ENCODE measurements at regions of chr2 and their contacts with region 1.

Region 1: GRCh38 chr2:20015472-20016083 is 3.1 kb upstream of the MATN3 start:
- DNase-seq: peak; percentile 63
- H3K4me3 ChIP-seq: no peak overlapping the region
- H3K27ac ChIP-seq: no peak overlapping the region
- H3K4me1 ChIP-seq: peaks cover 13% of the 10 kb centered on the region
- H3K27me3 ChIP-seq: peaks cover 0 to 3% of the 10 kb centered on the region in 2 experiments
- CTCF ChIP-seq: peak; percentile 29 to 44
- POLR2A ChIP-seq: no peak

Region 2: DNA sequence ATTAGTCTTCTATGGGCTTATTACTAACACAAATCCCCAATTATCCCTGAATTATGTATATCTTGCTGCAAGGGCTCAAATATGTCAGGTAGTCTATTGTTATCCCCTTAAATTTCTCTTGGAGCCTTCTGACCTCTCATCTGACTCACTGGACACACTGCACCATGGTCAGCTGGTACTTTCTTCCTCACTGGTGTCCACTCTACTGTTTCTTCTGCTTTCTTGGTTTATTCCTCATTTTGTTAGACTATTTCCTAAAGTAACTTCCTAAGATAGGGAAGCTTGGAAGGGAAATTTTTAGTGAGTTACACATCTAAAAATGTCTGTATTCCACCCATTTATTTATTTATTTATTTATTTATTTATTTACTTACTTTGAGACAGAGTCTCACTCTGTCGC is 52.2 kb before region 1 on chr2:
- CTCF ChIA-PET with region 1: interaction called, 104 read pairs
- POLR2A ChIA-PET with region 1: no interaction called
- dilution Hi-C with region 1: no loop called
- intact Hi-C with region 1: no loop called
- DNase-seq: no peak
- H3K4me3 ChIP-seq: no peak overlapping the region
- H3K27ac ChIP-seq: no peak overlapping the region
- H3K4me1 ChIP-seq: no peaks in the 10 kb centered on the region
- H3K27me3 ChIP-seq: no peaks in the 10 kb centered on the region
- CTCF ChIP-seq: no peak
- POLR2A ChIP-seq: no peak

Region 3: GRCh38 chr2:19989681-19990415 is 25.7 kb before region 1 on chr2 and contains the start of gene WDR35:
- CTCF ChIA-PET with region 1: interaction called, 14 read pairs
- POLR2A ChIA-PET with region 1: interaction called, 3 read pairs
- dilution Hi-C with region 1: no loop called
- intact Hi-C with region 1: loop called (anchors 1 kb)
- DNase-seq: peak; percentile 53
- H3K4me3 ChIP-seq: peak within 1 kb of the TSS; percentile 31 to 78 (median 74)
- H3K27ac ChIP-seq: peak within 1 kb of the TSS; percentile 40
- H3K4me1 ChIP-seq: peaks cover 13% of the 10 kb centered on the region
- H3K27me3 ChIP-seq: no peaks in the 10 kb centered on the region
- CTCF ChIP-seq: no peak
- POLR2A ChIP-seq: peak; percentile 83
- total RNA-seq, gene WDR35: 8.0 TPM in 2 replicates

Region 4: DNA sequence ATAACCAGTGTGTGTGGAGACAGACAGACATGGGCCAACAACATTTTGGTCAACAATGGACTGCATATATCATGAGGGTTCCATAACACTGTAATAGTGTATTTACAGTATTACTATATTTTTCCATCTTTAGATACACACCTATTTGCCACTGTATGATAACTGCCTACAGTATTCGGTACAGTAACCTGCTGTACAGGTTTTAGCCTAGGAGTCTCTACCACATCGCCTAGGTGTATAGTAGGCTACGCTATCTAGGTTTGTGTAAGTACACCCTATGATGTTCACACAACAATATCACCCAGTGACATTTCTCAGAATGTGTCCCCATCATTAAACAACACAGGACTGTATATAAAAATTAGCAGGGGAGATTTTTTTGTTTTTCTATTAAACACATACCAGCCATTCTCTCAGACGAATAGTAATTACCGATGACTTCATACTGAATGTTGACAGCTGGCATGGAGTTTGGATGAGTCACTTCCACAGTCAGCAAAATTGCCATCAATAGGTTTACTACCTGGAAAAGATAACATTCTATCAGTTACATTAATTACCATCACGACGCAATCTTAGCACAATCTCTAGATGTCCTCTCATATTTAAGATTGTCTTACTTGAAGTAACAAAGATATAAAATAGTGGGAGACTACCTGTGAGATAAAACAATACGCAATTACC is 25.1 kb after region 1 on chr2:
- CTCF ChIA-PET with region 1: interaction called, 146 read pairs
- POLR2A ChIA-PET with region 1: interaction called, 3 read pairs
- dilution Hi-C with region 1: no loop called
- intact Hi-C with region 1: no loop called
- DNase-seq: peak; percentile 85
- H3K4me3 ChIP-seq: no peak overlapping the region
- H3K27ac ChIP-seq: peak overlapping the region; percentile 7
- H3K4me1 ChIP-seq: peaks cover 53% of the 10 kb centered on the region
- H3K27me3 ChIP-seq: no peaks in the 10 kb centered on the region
- CTCF ChIP-seq: no peak
- POLR2A ChIP-seq: no peak

Region 5: GRCh38 chr2:20077466-20077865 is 61.9 kb after region 1 on chr2:
- CTCF ChIA-PET with region 1: interaction called, 16 read pairs
- POLR2A ChIA-PET with region 1: no interaction called
- dilution Hi-C with region 1: no loop called
- intact Hi-C with region 1: no loop called
- DNase-seq: no peak
- H3K4me3 ChIP-seq: no peak overlapping the region
- H3K27ac ChIP-seq: no peak overlapping the region
- H3K4me1 ChIP-seq: no peaks in the 10 kb centered on the region
- H3K27me3 ChIP-seq: peaks cover 7 to 14% of the 10 kb centered on the region in 2 experiments
- CTCF ChIP-seq: no peak
- POLR2A ChIP-seq: no peak

Region 6: DNA sequence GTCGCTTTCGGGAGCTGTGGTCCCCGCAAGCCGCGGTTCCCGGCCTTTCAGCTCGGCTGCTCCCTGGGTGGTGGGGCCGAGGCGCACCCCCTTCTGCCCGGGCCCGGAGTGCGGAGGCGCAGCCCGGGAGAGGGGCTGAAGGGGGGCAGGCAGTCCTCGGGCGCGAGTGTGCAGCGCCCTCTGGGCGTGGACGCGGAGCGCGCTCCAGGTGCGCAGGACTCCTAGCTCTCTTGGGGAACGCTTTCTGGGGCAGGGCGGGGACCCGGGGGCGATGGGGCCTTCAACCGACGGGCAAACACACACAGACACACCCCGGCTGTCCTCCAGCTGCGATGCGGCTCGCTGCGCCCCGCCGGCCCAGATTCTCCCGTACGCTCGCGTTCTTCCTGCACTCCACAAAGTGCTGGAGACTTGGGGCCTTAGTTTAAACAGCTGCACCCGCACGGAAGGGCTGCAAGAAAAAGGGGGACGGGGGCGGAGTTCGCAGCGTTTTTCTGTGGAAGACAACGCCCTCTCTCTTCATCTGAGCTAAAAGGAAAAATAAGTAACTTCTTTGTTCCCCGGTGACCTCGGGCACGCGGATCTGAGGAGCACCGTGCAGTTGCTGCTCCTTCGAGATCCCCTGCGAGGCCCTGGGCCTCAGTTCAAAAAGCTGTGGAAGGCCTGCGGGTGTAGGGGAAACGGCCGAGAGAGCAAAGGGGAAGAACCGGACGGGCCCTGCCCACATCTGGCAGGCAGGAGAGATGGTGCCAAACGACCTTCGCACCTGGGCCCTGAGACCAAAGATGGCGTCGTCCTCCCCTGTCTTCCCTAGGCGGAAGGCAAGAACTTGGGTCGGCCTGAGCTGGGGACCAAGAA is 209.9 kb after region 1 on chr2:
- CTCF ChIA-PET with region 1: interaction called, 8 read pairs
- POLR2A ChIA-PET with region 1: interaction called, 4 read pairs
- dilution Hi-C with region 1: no loop called
- intact Hi-C with region 1: loop called (anchors 2 kb)
- DNase-seq: peak; percentile 60
- H3K4me3 ChIP-seq: peak overlapping the region; percentile 21 to 45 (median 45)
- H3K27ac ChIP-seq: no peak overlapping the region
- H3K4me1 ChIP-seq: peaks cover 6% of the 10 kb centered on the region
- H3K27me3 ChIP-seq: peaks cover 6 to 15% of the 10 kb centered on the region in 2 experiments
- CTCF ChIP-seq: peak; percentile 25 to 65
- POLR2A ChIP-seq: no peak

Measured in endothelial cell of umbilical vein (primary cell).